Dorsolateral prefrontal cortex (tissue), 120 donors: ENCODE measurements at regions of chr1 and their contacts with region 1.

Region 1: GRCh38 chr1:30911046-30911954 is 2.7 kb upstream of the SDC3 start:
- DNase-seq: peak; percentile 78 to 91 (median 88)
- H3K4me3 ChIP-seq: no peak overlapping the region
- H3K27ac ChIP-seq: peak overlapping the region in 20 of 59 donors; percentile 1 to 79 (median 46)
- H3K27me3 ChIP-seq: no peaks in the 10 kb centered on the region
- CTCF ChIP-seq: peak; percentile 83 to 99 (median 95)

Region 2: GRCh38 chr1:30718636-30719405 is 192.5 kb before region 1 on chr1:
- intact Hi-C with region 1: loop called (anchors 1 to 5 kb)
- DNase-seq: peak in 5 of 10 donors; percentile 46 to 96 (median 86)
- H3K4me3 ChIP-seq: peak overlapping the region; percentile 51 to 88 (median 69)
- H3K27ac ChIP-seq: peak overlapping the region; percentile 91 to 100 (median 99)
- H3K27me3 ChIP-seq: no peaks in the 10 kb centered on the region
- CTCF ChIP-seq: peak in 55 of 56 donors; percentile 94 to 100 (median 99)

Region 3: GRCh38 chr1:30801771-30802198 is 109.5 kb before region 1 on chr1:
- intact Hi-C with region 1: loop called (anchors 1 kb)
- DNase-seq: peak; percentile 78 to 93 (median 88)
- H3K4me3 ChIP-seq: peak overlapping the region in 50 of 59 donors; percentile 8 to 60 (median 39)
- H3K27ac ChIP-seq: peak overlapping the region in 26 of 59 donors; percentile 1 to 84 (median 55)
- H3K27me3 ChIP-seq: no peaks in the 10 kb centered on the region
- CTCF ChIP-seq: peak; percentile 74 to 99 (median 97)

Region 4: DNA sequence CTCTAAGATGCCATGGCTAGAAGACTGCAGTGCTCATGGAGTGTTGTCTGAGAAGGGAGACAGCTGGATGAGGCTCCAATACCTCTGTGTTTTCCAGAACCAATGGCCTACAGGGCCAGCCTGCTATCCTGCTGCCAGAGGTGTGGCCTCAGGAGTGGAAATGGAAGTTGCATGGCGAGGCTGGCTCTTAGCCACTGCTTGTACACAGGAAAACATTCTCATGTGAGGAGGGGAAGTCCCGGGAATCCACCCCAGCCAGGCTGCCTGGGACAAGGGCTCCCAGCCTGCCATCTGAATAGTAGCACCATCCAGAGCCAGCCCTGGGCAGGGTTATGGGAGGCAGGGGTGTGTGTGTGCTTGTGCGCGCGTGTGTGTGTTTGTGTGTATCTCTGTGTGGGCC is 59.3 kb before region 1 on chr1:
- intact Hi-C with region 1: loop called in 1 of 2 experiments (anchors 10 kb)
- DNase-seq: no peak
- H3K4me3 ChIP-seq: no peak overlapping the region
- H3K27ac ChIP-seq: peak overlapping the region in 9 of 59 donors; percentile 18 to 56 (median 39)
- H3K27me3 ChIP-seq: no peaks in the 10 kb centered on the region
- CTCF ChIP-seq: no peak

Region 5: GRCh38 chr1:30895944-30896660 is 15.2 kb before region 1 on chr1:
- intact Hi-C with region 1: no loop called
- DNase-seq: no peak
- H3K4me3 ChIP-seq: no peak overlapping the region
- H3K27ac ChIP-seq: peak overlapping the region in 16 of 59 donors; percentile 0 to 59 (median 42)
- H3K27me3 ChIP-seq: no peaks in the 10 kb centered on the region
- CTCF ChIP-seq: no peak